ENCODE measurements at regions of chr4 and their contacts with region 1.

Region 1: DNA sequence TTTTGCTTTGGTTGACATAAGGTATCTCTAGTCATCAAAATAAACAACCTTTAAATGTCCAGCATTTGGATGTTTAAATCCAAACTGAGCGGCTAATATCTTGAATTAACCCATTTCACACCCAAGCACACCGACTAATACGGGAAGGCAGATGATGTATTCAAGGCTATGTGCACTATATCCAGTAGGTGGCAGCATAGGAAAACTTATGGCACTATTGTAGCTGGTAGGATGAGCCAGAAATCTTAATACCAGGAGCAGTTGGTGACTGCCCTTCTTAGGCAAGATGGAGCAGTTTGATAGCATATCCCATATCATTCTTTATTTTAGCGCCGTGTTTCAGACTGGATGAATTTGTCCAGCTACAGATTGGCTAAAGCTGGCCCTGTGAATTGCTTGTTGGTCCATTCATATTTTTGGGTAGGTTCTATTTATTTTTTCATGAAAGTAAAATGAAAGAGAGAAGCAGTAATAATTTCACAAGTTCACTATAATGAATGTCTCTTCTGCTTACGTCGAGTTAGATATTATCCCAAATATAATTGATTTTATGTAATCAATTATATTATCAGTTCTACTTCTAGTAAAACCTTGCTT is 24.4 kb downstream of the UCHL1 start:
- DNase-seq: peak in 1 of 2 donors; percentile 25
- H3K4me3 ChIP-seq: no peak overlapping the region
- H3K27ac ChIP-seq: no peak overlapping the region
- H3K4me1 ChIP-seq: no peaks in the 10 kb centered on the region
- H3K27me3 ChIP-seq: no peaks in the 10 kb centered on the region
- CTCF ChIP-seq: peak; percentile 71 to 97 (median 92)
- POLR2A ChIP-seq: no peak

Region 2: DNA sequence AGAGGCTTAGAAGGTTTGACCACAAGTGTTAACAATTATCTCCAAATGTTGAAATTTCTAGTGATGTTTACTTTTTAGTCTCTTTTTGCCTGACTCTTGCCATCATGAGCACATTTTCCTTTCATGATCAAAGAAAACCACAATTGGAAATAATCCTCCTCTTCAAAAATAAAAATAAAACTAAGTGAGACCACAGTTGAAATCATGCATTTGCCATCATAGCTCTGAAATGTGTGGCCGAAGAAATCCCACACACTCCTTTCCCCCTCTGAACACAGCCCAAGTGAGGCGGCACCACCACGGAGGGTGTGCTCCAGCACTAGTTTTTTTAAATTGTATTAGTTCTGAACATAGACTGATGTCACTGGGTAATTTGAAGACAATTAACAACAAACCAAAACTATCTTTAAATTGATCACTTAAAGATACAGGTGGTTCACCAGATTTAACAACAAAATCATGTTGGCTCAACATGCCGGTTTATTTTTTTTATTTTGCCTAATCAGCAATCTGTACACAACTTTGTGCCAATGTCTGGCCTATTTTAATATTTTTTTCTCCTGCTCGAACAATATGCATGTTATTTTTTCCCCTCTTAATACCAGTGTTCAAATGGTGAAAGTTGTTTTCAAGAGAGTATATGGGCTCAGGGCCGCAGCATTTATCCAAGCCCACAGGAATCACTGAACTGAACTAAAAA is 84.4 kb before region 1 on chr4:
- intact Hi-C with region 1: no loop called
- DNase-seq: no peak
- H3K4me3 ChIP-seq: no peak overlapping the region
- H3K27ac ChIP-seq: peak overlapping the region in 1 of 2 donors; percentile 44
- H3K4me1 ChIP-seq: no peaks in the 10 kb centered on the region
- H3K27me3 ChIP-seq: no peaks in the 10 kb centered on the region
- CTCF ChIP-seq: no peak
- POLR2A ChIP-seq: no peak

Region 3: GRCh38 chr4:41496977-41497376 is 215.8 kb after region 1 on chr4:
- intact Hi-C with region 1: loop called (anchors 10 kb)
- DNase-seq: no peak
- H3K4me3 ChIP-seq: no peak overlapping the region
- H3K27ac ChIP-seq: no peak overlapping the region
- H3K4me1 ChIP-seq: no peaks in the 10 kb centered on the region
- H3K27me3 ChIP-seq: no peaks in the 10 kb centered on the region
- CTCF ChIP-seq: no peak
- POLR2A ChIP-seq: no peak

Region 4: GRCh38 chr4:41644288-41644914 is 363.3 kb after region 1 on chr4:
- intact Hi-C with region 1: loop called (anchors 10 kb)
- DNase-seq: peak in 1 of 2 donors; percentile 63
- H3K4me3 ChIP-seq: peak overlapping the region in 2 of 3 donors; percentile 20 to 47
- H3K27ac ChIP-seq: no peak overlapping the region
- H3K4me1 ChIP-seq: no peaks in the 10 kb centered on the region
- H3K27me3 ChIP-seq: no peaks in the 10 kb centered on the region
- CTCF ChIP-seq: peak; percentile 32 to 62 (median 53)
- POLR2A ChIP-seq: no peak